CD4-positive, alpha-beta T cell (primary cell): ENCODE measurements at regions of chr19 and their contacts with region 1.

Region 1: DNA sequence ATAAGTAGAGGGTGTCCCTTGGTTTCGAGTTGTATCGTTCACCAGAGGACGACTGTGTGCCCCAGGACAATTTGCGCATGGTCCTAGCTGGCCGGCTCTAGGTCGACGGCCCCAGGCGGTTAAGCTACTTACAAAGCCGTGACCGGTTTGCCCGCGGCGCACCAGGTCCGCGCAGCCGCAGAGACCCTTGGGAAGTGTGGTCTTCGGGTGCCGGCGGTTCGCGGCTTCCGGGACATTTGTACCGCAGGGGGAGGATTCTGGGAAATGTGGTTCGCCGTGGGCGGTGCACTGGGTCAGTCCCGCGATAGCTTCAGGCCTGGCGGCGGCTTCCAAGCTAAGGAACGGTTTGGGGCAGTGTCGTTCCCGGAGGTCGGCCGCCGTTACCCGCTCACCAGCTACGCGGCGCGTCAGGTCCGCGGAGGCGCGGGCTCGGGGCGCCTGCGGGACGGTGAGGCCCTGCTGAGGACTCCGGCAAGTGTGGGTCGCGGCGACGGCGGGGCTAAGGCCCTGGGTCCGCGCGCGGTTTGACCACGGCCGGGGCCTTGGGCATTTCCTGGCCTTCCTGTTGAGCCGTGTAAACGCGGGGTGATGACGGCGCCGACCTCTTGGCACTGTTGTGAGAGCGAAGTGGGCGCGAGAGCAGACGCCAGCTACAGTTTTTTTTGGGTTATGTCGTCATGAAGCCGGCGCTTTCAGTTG is at the start of gene ZNF302:
- DNase-seq: peak; percentile 87 to 97 (median 92)
- ATAC-seq: peak; percentile 86
- H3K4me3 ChIP-seq: peak within 1 kb of the TSS; percentile 60
- H3K4me3 Mint-ChIP-seq: peak within 1 kb of the TSS; percentile 99
- H3K27ac ChIP-seq: peak within 1 kb of the TSS; percentile 85 to 88
- H3K27ac Mint-ChIP-seq: peak within 1 kb of the TSS; percentile 99
- H3K4me1 ChIP-seq: peaks cover 23% of the 10 kb centered on the region
- H3K4me1 Mint-ChIP-seq: peaks cover 35% of the 10 kb centered on the region
- H3K27me3 ChIP-seq: no peaks in the 10 kb centered on the region
- H3K27me3 Mint-ChIP-seq: peaks cover 22% of the 10 kb centered on the region
- CTCF ChIP-seq: no peak
- total RNA-seq, gene ZNF302: 12.2 to 12.9 TPM

Region 2: GRCh38 chr19:34171877-34172660 is 505.5 kb before region 1 on chr19 and contains the start of gene LSM14A:
- CTCF ChIA-PET with region 1: no interaction called
- POLR2A ChIA-PET with region 1: interaction called, 9 read pairs
- intact Hi-C with region 1: loop called in 1 of 2 experiments (anchors 5 kb)
- DNase-seq: peak; percentile 84 to 97 (median 91)
- ATAC-seq: peak; percentile 85
- H3K4me3 ChIP-seq: peak within 1 kb of the TSS; percentile 95
- H3K4me3 Mint-ChIP-seq: peak within 1 kb of the TSS; percentile 99
- H3K27ac ChIP-seq: peak within 1 kb of the TSS; percentile 97 to 98
- H3K27ac Mint-ChIP-seq: peak within 1 kb of the TSS; percentile 97
- H3K4me1 ChIP-seq: peaks cover 40% of the 10 kb centered on the region
- H3K4me1 Mint-ChIP-seq: peaks cover 50% of the 10 kb centered on the region
- H3K27me3 ChIP-seq: no peaks in the 10 kb centered on the region
- H3K27me3 Mint-ChIP-seq: no peaks in the 10 kb centered on the region
- CTCF ChIP-seq: no peak
- total RNA-seq, gene LSM14A: 210 to 217 TPM

Region 3: DNA sequence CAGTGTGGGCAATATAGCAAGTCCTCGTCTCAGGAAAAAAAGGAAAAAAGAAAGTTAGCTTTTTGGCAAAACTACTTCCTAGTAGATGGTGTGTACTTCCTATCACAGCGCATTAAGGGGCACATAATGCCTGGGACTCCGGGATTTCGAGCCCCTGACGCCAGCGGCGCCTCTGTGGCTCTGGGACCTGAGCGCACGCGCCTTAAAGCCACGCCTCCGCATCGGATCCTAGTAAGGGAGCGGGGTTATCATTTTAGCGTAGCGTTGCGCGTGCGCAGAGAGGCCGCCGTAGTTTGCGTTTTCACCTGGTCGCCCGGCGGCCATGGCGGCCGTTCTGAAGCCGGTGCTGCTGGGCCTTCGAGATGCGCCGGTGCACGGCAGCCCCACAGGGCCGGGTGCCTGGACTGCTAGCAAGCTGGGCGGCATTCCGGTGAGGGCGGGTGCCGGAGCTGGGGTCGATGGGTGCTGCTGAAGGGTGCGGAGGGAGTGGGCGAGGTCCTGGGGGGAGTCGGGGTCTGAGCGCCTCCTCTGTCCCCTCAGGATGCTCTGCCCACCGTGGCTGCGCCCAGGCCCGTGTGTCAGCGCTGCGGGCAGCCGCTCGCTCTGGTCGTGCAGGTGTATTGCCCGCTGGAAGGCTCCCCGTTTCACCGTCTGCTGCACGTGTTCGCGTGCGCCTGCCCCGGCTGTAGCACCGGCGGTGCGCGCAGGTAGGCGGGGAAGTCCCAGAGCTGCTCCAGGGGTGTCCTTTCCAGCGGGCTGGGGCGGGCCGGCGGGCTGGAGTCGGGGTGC is 273.2 kb before region 1 on chr19 and contains the start of gene PDCD2L:
- CTCF ChIA-PET with region 1: no interaction called
- POLR2A ChIA-PET with region 1: no interaction called
- intact Hi-C with region 1: loop called in 1 of 2 experiments (anchors 10 kb)
- DNase-seq: peak; percentile 87 to 97 (median 92)
- ATAC-seq: peak; percentile 95
- H3K4me3 ChIP-seq: peak within 1 kb of the TSS; percentile 98
- H3K4me3 Mint-ChIP-seq: peak within 1 kb of the TSS; percentile 95
- H3K27ac ChIP-seq: peak within 1 kb of the TSS; percentile 34 to 72
- H3K27ac Mint-ChIP-seq: peak within 1 kb of the TSS; percentile 86
- H3K4me1 ChIP-seq: peaks cover 10% of the 10 kb centered on the region
- H3K4me1 Mint-ChIP-seq: peaks cover 25% of the 10 kb centered on the region
- H3K27me3 ChIP-seq: no peaks in the 10 kb centered on the region
- H3K27me3 Mint-ChIP-seq: no peaks in the 10 kb centered on the region
- CTCF ChIP-seq: no peak
- total RNA-seq, gene PDCD2L: 3.8 to 3.9 TPM

Region 4: DNA sequence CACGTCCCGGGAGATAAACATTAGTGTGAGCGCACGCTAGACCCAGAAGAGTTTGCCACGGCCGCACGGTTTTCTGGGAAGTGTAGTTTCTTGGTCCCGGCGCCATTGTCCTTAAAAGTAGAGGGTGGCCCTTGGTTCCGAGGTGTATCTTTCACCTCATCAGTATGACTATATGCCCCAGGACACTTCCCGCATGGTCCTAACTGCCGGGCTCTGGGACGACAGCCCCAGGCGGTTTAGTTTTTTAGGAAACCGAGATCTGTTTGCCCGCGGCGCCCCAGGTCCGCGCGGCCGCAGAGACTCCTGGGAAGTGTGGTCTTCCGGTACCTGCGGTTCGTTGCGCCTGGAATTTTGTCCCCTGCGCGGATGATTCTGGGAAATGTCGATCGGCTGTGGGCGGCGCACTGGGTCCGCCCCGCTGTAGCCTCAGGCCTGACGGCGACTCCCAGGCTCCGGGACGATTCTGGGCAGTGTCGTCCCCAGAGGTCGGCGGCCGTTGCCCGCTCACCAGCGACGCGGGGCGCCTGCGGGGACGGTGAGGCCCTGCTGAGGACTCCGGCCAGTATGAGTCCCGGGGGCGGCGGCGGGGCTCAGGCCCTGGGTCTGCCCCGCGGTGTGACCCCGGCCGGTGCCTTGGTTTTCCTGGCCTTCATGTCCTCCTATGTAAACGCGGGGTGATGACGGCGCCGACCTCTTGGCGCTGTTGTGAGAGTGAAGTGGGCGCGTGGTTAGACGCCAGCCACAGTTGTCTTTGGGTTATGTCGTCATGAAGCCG is 56.5 kb after region 1 on chr19 and contains the start of gene ZNF181:
- CTCF ChIA-PET with region 1: interaction called, 4 read pairs
- POLR2A ChIA-PET with region 1: interaction called, 18 read pairs
- intact Hi-C with region 1: loop called (anchors 1 kb)
- DNase-seq: peak; percentile 64 to 90 (median 74)
- ATAC-seq: peak; percentile 84
- H3K4me3 ChIP-seq: peak within 1 kb of the TSS; percentile 85
- H3K4me3 Mint-ChIP-seq: peak within 1 kb of the TSS; percentile 96
- H3K27ac ChIP-seq: peak within 1 kb of the TSS; percentile 91
- H3K27ac Mint-ChIP-seq: peak within 1 kb of the TSS; percentile 92
- H3K4me1 ChIP-seq: peaks cover 28% of the 10 kb centered on the region
- H3K4me1 Mint-ChIP-seq: peaks cover 34% of the 10 kb centered on the region
- H3K27me3 ChIP-seq: no peaks in the 10 kb centered on the region
- H3K27me3 Mint-ChIP-seq: no peaks in the 10 kb centered on the region
- CTCF ChIP-seq: no peak
- total RNA-seq, gene ZNF181: 2.0 to 2.9 TPM

Region 5: GRCh38 chr19:34999498-35000341 is 322.2 kb after region 1 on chr19 and contains the start of gene GRAMD1A:
- CTCF ChIA-PET with region 1: no interaction called
- POLR2A ChIA-PET with region 1: interaction called, 4 read pairs
- intact Hi-C with region 1: loop called in 1 of 2 experiments (anchors 10 kb)
- DNase-seq: peak; percentile 50 to 85 (median 74)
- ATAC-seq: peak; percentile 28
- H3K4me3 ChIP-seq: peak within 1 kb of the TSS; percentile 59
- H3K4me3 Mint-ChIP-seq: peak within 1 kb of the TSS; percentile 99
- H3K27ac ChIP-seq: peak within 1 kb of the TSS; percentile 79 to 92
- H3K27ac Mint-ChIP-seq: peak within 1 kb of the TSS; percentile 98
- H3K4me1 ChIP-seq: peaks cover 89% of the 10 kb centered on the region
- H3K4me1 Mint-ChIP-seq: peaks cover 72% of the 10 kb centered on the region
- H3K27me3 ChIP-seq: no peaks in the 10 kb centered on the region
- H3K27me3 Mint-ChIP-seq: no peaks in the 10 kb centered on the region
- CTCF ChIP-seq: no peak
- total RNA-seq, gene GRAMD1A: 221 to 229 TPM